PC-9 (cell line): ENCODE measurements at regions of chr12 and their contacts with region 1.

Region 1: DNA sequence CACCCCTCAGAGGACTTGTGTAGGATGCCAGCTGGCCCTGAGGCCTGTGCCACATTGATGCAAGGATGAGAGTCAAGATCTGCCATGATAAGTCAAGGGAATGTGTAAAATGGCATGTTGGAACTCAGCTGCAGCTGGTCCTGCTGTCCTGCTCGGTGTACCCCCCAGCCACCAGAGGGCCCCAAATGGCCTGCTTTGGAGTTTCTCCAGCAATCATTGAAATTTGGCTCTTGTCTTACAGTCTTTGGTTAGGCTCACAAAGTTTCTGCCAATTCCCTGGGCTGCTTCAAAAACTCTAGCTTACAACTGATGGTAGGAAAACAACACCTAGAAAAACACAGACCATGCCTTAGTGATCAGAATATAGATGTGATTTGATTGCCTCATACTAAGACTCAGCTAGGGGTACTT is 76.8 kb downstream of the HSD17B6 start:
- DNase-seq: peak; percentile 37 to 56
- H3K4me3 ChIP-seq: no peak overlapping the region
- H3K27ac ChIP-seq: no peak overlapping the region
- H3K4me1 ChIP-seq: no peaks in the 10 kb centered on the region
- H3K27me3 ChIP-seq: no peaks in the 10 kb centered on the region
- CTCF ChIP-seq: peak; percentile 70

Region 2: GRCh38 chr12:55258303-55258702 is 1581.6 kb before region 1 on chr12:
- CTCF ChIA-PET with region 1: no interaction called
- POLR2A ChIA-PET with region 1: no interaction called
- intact Hi-C with region 1: no loop called
- DNase-seq: no peak
- H3K4me3 ChIP-seq: no peak overlapping the region
- H3K27ac ChIP-seq: no peak overlapping the region
- H3K4me1 ChIP-seq: no peaks in the 10 kb centered on the region
- H3K27me3 ChIP-seq: no peaks in the 10 kb centered on the region
- CTCF ChIP-seq: no peak

Region 3: DNA sequence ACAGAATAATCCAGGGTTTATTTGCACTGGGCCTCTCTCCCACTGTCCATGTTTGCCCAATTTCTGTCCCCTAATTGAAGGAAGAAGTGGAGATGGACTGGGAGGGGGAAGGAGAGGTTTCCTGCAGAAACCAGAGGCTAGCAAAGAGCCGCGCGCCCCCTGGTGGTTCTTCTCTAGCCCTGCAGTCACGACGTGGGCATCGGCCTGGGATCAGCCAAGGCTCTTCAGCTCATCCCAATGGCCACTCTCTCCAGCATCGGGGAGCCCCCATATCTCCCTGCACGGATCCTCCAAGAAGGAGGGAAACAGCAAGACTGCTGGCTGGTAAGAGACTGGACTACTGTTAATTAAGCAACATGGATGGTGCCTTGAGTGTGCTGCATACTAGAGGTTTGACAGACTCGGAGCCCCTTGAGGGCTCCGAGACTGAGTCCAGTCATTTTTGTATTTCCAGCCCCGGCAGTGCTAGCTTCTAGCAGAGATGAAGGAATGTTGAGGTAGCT is 147.7 kb after region 1 on chr12:
- CTCF ChIA-PET with region 1: interaction called, 3 read pairs
- POLR2A ChIA-PET with region 1: interaction called, 5 read pairs
- intact Hi-C with region 1: loop called (anchors 1 kb)
- DNase-seq: peak in 1 of 2 experiments; percentile 66
- H3K4me3 ChIP-seq: no peak overlapping the region
- H3K27ac ChIP-seq: no peak overlapping the region
- H3K4me1 ChIP-seq: peaks cover 12% of the 10 kb centered on the region
- H3K27me3 ChIP-seq: no peaks in the 10 kb centered on the region
- CTCF ChIP-seq: peak; percentile 95